Aorta (tissue), 5 donors: ENCODE measurements at regions of chr10 and their contacts with region 1.

Region 1: DNA sequence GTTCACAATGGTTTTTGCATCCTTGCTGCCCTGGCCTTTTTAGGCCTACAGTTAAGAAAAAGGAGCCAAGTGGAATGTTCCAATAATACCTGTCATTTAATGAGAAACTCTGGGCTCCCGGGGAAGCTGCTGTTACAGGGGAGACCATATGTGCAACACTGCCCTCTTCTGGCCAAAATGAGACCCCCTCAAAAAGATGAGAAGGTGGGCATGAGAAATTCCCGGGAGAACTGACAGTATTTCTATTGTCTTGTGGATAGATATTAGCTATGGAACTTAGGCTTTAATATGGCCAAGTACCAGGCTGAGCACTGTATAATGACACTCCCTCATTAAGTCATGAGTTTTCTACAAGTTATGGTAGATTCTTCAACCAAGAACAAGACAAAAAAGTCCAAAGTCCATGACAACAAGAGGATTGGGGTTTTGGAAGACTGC is 99.4 kb downstream of the CCDC3 start:
- DNase-seq: no peak
- ATAC-seq: no peak
- H3K4me3 ChIP-seq: no peak overlapping the region
- H3K27ac ChIP-seq: no peak overlapping the region
- H3K4me1 ChIP-seq: no peaks in the 10 kb centered on the region
- H3K27me3 ChIP-seq: no peaks in the 10 kb centered on the region

Region 2: DNA sequence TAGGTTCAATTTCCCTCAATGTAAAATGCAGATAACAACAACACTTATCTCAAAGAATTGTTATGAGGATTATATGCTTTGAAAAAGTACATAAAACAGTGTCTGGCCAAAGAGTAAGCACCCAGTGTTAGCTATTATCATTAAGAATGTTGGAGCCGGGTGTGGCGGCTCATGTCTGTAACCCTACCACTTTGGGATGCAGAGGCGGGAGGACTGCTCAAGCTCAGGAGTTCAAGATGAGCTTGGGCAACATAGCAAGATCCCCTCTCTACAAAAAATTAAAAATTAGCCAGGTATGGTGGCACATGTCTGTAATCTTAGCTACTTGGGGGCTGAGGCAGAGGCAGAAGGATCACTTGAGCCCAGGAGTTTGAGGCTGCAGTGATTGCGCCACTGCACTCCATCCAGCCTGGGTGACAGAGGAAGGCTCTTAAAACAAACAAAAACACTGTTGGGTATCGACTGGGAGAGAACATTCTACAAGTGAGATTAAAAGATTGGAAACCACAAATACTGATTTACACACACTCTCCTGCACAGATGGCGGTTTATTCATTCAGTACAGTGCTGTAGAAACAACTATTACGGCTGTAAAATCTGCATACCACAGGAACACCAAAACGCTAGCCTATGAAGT is 971.7 kb before region 1 on chr10:
- intact Hi-C with region 1: no loop called
- DNase-seq: no peak
- ATAC-seq: no peak
- H3K4me3 ChIP-seq: no peak overlapping the region
- H3K27ac ChIP-seq: no peak overlapping the region
- H3K4me1 ChIP-seq: no peaks in the 10 kb centered on the region
- H3K27me3 ChIP-seq: no peaks in the 10 kb centered on the region

Region 3: DNA sequence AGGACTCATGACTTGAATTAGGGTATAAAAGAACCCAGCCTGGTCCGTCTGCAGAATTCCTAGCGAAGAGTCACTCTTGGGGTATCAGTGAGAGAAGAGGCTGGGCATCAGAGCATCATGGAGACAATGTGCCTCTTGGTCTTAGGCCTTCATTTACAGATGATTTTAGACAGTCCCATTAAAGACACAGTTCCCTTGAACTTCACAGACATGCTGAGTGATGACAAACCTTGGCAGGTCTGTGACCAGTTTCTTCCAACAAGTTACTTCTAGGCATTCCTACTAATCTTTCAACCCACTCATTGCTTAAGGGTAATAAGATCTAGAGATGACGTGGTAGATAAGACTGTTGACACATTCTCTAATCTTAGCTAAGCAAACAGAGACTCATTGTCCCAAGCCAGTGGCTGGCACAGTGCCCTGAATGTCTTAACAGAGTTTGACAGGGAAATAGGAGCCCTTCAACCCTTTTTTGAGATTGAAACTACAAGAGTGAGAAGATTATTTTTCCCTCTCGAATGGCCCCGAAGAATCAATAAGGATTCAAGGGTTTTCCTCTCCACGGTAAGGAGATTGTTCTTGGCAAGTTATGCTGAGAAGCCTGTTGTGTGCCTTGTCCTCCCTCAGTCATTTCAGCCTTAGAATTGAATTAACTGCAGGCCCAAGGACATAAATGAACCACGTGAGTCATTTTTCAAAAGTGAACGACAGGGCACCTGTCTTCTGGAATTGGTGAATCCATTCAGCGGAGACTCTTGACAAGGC is 181.8 kb before region 1 on chr10:
- intact Hi-C with region 1: loop called (anchors 5 to 10 kb)
- DNase-seq: peak; percentile 94 to 95
- ATAC-seq: peak; percentile 84
- H3K4me3 ChIP-seq: no peak overlapping the region
- H3K27ac ChIP-seq: peak overlapping the region; percentile 52 to 86
- H3K4me1 ChIP-seq: peaks cover 7 to 8% of the 10 kb centered on the region in 2 donors
- H3K27me3 ChIP-seq: no peaks in the 10 kb centered on the region

Region 4: GRCh38 chr10:12823328-12823727 is 78.8 kb before region 1 on chr10:
- intact Hi-C with region 1: loop called in 1 of 2 experiments (anchors 5 kb)
- DNase-seq: no peak
- ATAC-seq: peak; percentile 42
- H3K4me3 ChIP-seq: no peak overlapping the region
- H3K27ac ChIP-seq: peak overlapping the region in 1 of 2 donors; percentile 66
- H3K4me1 ChIP-seq: peaks cover 0 to 2% of the 10 kb centered on the region in 2 donors
- H3K27me3 ChIP-seq: no peaks in the 10 kb centered on the region

Region 5: GRCh38 chr10:12960334-12960898 is 58.3 kb after region 1 on chr10:
- intact Hi-C with region 1: loop called in 1 of 2 experiments (anchors 10 kb)
- DNase-seq: peak; percentile 67 to 77
- ATAC-seq: peak; percentile 75
- H3K4me3 ChIP-seq: no peak overlapping the region
- H3K27ac ChIP-seq: peak overlapping the region; percentile 65 to 81
- H3K4me1 ChIP-seq: peaks cover 0 to 2% of the 10 kb centered on the region in 2 donors
- H3K27me3 ChIP-seq: no peaks in the 10 kb centered on the region

Region 6: DNA sequence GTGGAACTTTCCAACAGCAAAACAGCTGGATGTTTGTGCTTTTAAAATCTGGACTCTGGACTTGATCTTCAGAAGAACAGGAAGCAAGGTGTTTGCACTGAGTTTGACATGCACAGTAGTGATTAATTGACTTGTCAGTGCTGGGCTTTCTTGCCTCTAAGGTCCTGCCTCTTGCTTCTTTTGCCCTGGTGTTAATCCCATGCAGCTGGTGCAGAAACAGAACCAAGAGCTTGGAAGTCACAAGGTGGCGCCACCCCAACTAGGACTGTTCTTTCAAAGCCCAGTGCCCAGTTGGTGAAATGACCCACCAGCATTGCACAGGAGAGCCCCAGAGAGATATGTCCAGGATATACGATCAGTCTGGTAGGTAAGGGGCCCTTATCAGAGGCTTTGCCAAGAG is 512.7 kb after region 1 on chr10:
- intact Hi-C with region 1: no loop called
- DNase-seq: no peak
- ATAC-seq: no peak
- H3K4me3 ChIP-seq: no peak overlapping the region
- H3K27ac ChIP-seq: no peak overlapping the region
- H3K4me1 ChIP-seq: no peaks in the 10 kb centered on the region
- H3K27me3 ChIP-seq: no peaks in the 10 kb centered on the region